OCI-LY7 (cell line): ENCODE measurements at regions of chr9 and their contacts with region 1.

Region 1: DNA sequence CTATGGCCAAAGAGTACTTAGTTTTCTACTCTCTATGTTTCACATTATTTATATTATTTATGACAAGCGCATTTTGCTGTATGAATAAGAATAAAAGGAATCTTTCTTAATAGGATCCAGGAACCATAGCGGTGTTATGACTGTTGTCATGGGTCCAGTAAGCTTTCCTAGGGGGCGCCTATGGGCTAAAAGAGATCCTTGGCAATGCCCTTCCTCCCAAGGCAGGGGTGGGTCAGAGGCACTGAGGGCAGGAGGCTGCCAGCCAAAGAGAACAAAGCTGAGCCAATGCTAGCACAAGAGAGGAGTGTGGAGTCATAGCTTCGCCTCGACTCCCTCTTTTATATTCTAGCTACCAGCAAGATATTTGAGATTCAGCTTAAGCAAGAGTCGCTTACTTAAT is 98.4 kb upstream of the GNAQ start:
- DNase-seq: peak; percentile 40
- H3K4me3 ChIP-seq: no peak overlapping the region
- H3K27ac ChIP-seq: no peak overlapping the region
- H3K4me1 ChIP-seq: peaks cover 19% of the 10 kb centered on the region
- CTCF ChIP-seq: peak; percentile 73

Region 2: DNA sequence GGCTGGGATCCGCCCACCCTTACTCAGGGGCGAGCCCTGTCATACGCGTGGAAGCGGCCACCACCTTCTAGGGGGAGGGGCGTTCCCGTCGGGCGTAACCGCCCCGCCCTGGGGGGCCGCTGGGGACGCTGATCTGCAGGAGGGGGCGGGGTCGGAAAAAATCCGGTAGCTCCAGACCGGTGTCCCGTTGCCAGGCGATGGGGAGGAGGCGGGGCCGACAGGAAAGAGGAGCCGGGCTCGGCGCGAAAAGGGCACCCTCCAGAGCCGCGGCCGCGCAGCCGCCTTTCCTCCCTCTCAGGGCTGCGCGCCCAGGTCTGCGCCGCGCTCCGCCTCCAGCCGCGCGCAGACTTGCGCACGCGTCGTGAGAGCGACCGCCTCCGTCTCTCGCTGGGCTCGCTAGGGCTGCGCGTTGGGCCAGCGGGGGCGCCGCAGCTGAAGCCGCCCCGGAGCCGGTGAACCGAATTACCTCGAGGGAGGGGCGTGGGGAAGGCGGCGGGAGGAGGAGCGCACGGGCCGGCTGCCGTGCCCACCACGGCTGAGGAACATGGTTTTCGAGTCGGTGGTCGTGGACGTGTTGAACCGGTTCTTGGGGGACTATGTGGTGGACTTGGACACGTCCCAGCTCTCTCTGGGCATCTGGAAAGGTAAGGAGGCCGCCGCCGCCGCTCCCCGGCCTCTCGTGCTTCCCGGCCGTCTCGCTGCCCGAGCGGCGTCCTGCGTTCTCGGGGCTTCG is 952.7 kb before region 1 on chr9 and contains the start of gene VPS13A:
- CTCF ChIA-PET with region 1: no interaction called
- POLR2A ChIA-PET with region 1: no interaction called
- intact Hi-C with region 1: loop called (anchors 10 kb)
- DNase-seq: peak; percentile 93
- H3K4me3 ChIP-seq: peak within 1 kb of the TSS; percentile 86
- H3K27ac ChIP-seq: peak within 1 kb of the TSS; percentile 58
- H3K4me1 ChIP-seq: peaks cover 27% of the 10 kb centered on the region
- CTCF ChIP-seq: peak; percentile 42; the same call in 1 of the 2 replicates
- total RNA-seq, gene VPS13A: 22.8 and 27.0 TPM in 2 replicates